ENCODE measurements at regions of chr2 and their contacts with region 1.

Region 1: GRCh38 chr2:54723131-54723995 is at the start of gene EML6:
- DNase-seq: peak; percentile 99
- H3K4me3 ChIP-seq: peak within 1 kb of the TSS; percentile 80
- H3K27ac ChIP-seq: peak within 1 kb of the TSS; percentile 56
- H3K4me1 ChIP-seq: peaks cover 33% of the 10 kb centered on the region
- H3K27me3 ChIP-seq: no peaks in the 10 kb centered on the region
- CTCF ChIP-seq: peak; percentile 36; the same call in 1 of the 2 replicates
- total RNA-seq, gene EML6: 3.7 and 6.7 TPM in 2 replicates

Region 2: GRCh38 chr2:54673501-54673998 is 49.8 kb before region 1 on chr2:
- CTCF ChIA-PET with region 1: no interaction called
- POLR2A ChIA-PET with region 1: interaction called, 5 read pairs
- intact Hi-C with region 1: loop called (anchors 1 kb)
- DNase-seq: peak in 1 of 2 experiments; percentile 60
- H3K4me3 ChIP-seq: no peak overlapping the region
- H3K27ac ChIP-seq: peak overlapping the region; percentile 58
- H3K4me1 ChIP-seq: peaks cover 31% of the 10 kb centered on the region
- H3K27me3 ChIP-seq: no peaks in the 10 kb centered on the region
- CTCF ChIP-seq: no peak

Region 3: GRCh38 chr2:54838585-54839035 is 115.2 kb after region 1 on chr2:
- CTCF ChIA-PET with region 1: interaction called, 5 read pairs
- POLR2A ChIA-PET with region 1: no interaction called
- intact Hi-C with region 1: loop called (anchors 2 kb)
- DNase-seq: peak; percentile 50 to 63
- H3K4me3 ChIP-seq: no peak overlapping the region
- H3K27ac ChIP-seq: no peak overlapping the region
- H3K4me1 ChIP-seq: no peaks in the 10 kb centered on the region
- H3K27me3 ChIP-seq: no peaks in the 10 kb centered on the region
- CTCF ChIP-seq: peak; percentile 98

Region 4: GRCh38 chr2:54977149-54977548 is 253.8 kb after region 1 on chr2:
- CTCF ChIA-PET with region 1: no interaction called
- POLR2A ChIA-PET with region 1: no interaction called
- intact Hi-C with region 1: loop called (anchors 10 kb)
- DNase-seq: no peak
- H3K4me3 ChIP-seq: no peak overlapping the region
- H3K27ac ChIP-seq: no peak overlapping the region
- H3K4me1 ChIP-seq: peaks cover 26% of the 10 kb centered on the region
- H3K27me3 ChIP-seq: no peaks in the 10 kb centered on the region
- CTCF ChIP-seq: no peak

Region 5: GRCh38 chr2:55232084-55232862 is 508.9 kb after region 1 on chr2 and contains the starts of genes CLHC1 and RPS27A:
- CTCF ChIA-PET with region 1: no interaction called
- POLR2A ChIA-PET with region 1: no interaction called
- intact Hi-C with region 1: loop called (anchors 2 kb)
- DNase-seq: peak; percentile 94 to 98
- H3K4me3 ChIP-seq: peak within 1 kb of the TSS; percentile 97
- H3K27ac ChIP-seq: peak within 1 kb of the TSS; percentile 83
- H3K4me1 ChIP-seq: peaks cover 29% of the 10 kb centered on the region
- H3K27me3 ChIP-seq: no peaks in the 10 kb centered on the region
- CTCF ChIP-seq: peak; percentile 7; the same call in 1 of the 2 replicates
- total RNA-seq, gene CLHC1: 20.5 and 27.1 TPM in 2 replicates
- total RNA-seq, gene RPS27A: 1,269 and 1,616 TPM in 2 replicates

Region 6: DNA sequence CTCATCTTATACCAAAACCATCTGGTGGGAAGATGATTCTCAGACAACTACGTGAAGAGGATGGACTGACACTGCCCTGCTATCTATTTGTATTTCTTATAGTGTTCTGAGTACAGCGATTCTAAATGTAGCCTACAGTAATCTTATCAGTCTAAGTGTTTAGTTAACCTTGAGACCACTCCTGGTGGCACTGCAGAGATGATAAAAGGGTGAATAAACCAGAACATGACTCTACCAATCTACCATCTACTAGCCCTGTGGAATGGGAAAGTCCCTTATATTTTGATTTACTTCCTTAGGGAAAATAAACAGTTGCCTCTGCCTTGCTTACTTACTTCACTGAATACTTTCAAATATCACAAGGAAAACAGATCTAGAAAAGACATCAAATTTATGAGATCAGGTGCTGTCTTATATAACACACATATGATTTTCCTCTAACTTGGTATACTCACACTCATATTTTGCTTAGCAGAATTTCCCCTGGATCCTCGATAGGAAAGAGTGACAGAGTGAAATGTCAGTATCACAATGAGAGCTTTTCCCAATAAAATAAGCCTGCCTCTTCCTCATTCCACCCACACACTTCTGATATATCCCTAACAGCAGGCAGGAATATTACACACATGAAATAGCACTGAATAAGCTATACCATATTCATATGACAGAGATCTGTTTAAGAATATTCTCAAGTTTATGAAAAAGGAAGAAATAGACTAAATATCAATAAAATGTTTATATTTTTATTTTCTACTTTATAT is 604.3 kb after region 1 on chr2:
- CTCF ChIA-PET with region 1: no interaction called
- POLR2A ChIA-PET with region 1: no interaction called
- intact Hi-C with region 1: no loop called
- DNase-seq: no peak
- H3K4me3 ChIP-seq: no peak overlapping the region
- H3K27ac ChIP-seq: no peak overlapping the region
- H3K4me1 ChIP-seq: no peaks in the 10 kb centered on the region
- H3K27me3 ChIP-seq: no peaks in the 10 kb centered on the region
- CTCF ChIP-seq: no peak

Region 7: GRCh38 chr2:55519938-55520885 is 796.8 kb after region 1 on chr2:
- CTCF ChIA-PET with region 1: no interaction called
- POLR2A ChIA-PET with region 1: interaction called, 4 read pairs
- intact Hi-C with region 1: loop called (anchors 2 kb)
- DNase-seq: peak in 1 of 2 experiments; percentile 37
- H3K4me3 ChIP-seq: peak overlapping the region; percentile 86
- H3K27ac ChIP-seq: peak overlapping the region; percentile 32
- H3K4me1 ChIP-seq: peaks cover 18% of the 10 kb centered on the region
- H3K27me3 ChIP-seq: no peaks in the 10 kb centered on the region
- CTCF ChIP-seq: no peak

Region 8: GRCh38 chr2:55617175-55618024 is 894.0 kb after region 1 on chr2 and contains the start of gene PPP4R3B:
- CTCF ChIA-PET with region 1: no interaction called
- POLR2A ChIA-PET with region 1: no interaction called
- intact Hi-C with region 1: loop called (anchors 10 kb)
- DNase-seq: peak; percentile 100
- H3K4me3 ChIP-seq: peak within 1 kb of the TSS; percentile 100
- H3K27ac ChIP-seq: peak within 1 kb of the TSS; percentile 90
- H3K4me1 ChIP-seq: peaks cover 23% of the 10 kb centered on the region
- H3K27me3 ChIP-seq: no peaks in the 10 kb centered on the region
- CTCF ChIP-seq: peak; percentile 48; the same call in 1 of the 2 replicates
- total RNA-seq, gene PPP4R3B: 66.2 and 73.4 TPM in 2 replicates

Measured in PC-9 (cell line).